ENCODE measurements at regions of chr15 and their contacts with region 1.

Region 1: DNA sequence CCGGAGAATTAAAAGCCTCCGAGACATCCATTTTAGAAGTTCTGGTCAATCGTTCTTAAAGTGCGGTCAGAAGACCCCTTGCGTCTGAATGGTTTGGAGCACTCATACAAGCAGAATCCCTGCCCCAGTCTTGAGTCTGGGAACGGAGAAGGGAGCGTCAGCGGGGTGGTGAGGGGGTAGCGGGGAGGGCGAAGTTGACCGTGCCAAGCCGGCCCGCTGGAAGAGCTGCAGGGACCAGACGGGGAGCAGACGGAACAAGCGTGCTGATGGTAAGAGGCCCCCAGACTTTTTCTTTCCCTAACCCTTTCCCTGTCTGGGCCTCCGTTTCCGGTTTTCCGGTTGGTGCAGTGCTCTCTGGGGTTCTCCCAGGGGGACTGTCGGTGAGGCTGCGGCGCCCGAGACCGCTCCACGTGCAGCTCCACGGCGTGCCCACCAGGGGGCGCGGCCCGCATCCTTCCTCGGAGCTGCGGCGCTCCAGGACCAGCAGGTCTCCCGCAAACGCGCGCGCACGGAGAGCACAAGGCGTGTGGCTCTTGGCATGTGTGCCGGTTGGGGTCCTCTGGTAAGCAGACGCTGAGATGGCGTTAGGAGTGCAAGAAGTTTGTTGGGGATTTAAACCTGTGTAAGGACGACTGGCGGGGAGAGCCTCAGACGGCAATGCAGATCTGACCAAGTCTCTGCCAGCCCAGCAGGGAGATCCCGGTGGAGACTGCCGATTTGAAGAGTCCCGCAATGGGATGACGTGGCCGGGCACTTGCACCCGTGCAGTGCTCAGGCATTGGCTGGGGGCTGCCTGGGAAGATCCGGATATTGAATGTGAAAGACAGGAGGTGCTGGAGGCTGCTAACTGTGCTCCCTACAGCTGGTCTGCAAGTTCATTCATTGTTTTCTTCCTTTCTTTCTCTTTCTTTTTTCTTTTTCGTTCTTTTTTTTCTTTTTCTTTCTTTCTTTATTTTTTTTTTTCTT is 19.2 kb upstream of the CORO2B start:
- DNase-seq: peak; percentile 89
- ATAC-seq: peak; percentile 85
- H3K4me3 Mint-ChIP-seq: peak overlapping the region; percentile 94
- H3K27ac Mint-ChIP-seq: peak overlapping the region; percentile 72
- H3K4me1 Mint-ChIP-seq: peaks cover 29% of the 10 kb centered on the region
- H3K27me3 Mint-ChIP-seq: peaks cover 20% of the 10 kb centered on the region
- CTCF ChIP-seq: peak; percentile 91

Region 2: DNA sequence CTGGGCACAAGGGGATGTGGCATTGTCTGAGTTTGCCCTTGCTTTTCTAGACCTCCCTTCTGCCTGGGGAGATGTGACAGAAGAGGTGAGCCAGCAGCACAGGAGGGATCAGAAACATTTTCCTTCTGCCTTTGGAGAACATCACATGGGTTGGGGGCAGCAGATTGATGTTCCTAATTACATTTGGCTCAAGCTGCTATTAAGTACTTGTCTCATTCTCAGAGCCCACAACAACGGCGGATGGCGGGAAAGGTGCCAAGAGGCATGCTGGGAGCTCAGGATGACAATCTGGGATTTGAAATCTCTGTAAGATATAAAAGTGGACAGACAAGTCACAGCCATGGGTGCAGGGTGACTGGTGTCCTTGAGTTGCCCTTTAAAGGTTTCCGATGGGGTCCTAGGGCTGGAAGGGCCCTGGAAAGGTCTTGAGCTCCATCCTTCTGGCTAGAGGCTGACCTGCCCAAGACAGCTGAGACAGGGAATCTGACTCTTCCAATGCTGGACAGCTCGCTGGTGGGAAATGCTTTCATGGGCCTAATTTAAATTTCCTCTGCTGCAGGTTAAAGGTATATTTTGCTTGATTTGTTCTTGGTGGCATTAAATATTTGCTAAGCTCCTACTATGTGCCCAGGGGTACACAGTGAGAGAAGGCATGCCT is 16.7 kb after region 1 on chr15:
- CTCF ChIA-PET with region 1: interaction called, 40 read pairs
- POLR2A ChIA-PET with region 1: interaction called, 3 read pairs
- DNase-seq: no peak
- ATAC-seq: no peak
- H3K4me3 Mint-ChIP-seq: no peak overlapping the region
- H3K27ac Mint-ChIP-seq: no peak overlapping the region
- H3K4me1 Mint-ChIP-seq: peaks cover 61% of the 10 kb centered on the region
- H3K27me3 Mint-ChIP-seq: peaks cover 51% of the 10 kb centered on the region
- CTCF ChIP-seq: no peak

Region 3: GRCh38 chr15:68631601-68632051 is 72.0 kb after region 1 on chr15:
- CTCF ChIA-PET with region 1: interaction called, 32 read pairs
- POLR2A ChIA-PET with region 1: no interaction called
- DNase-seq: peak; percentile 63
- ATAC-seq: peak; percentile 85
- H3K4me3 Mint-ChIP-seq: no peak overlapping the region
- H3K27ac Mint-ChIP-seq: no peak overlapping the region
- H3K4me1 Mint-ChIP-seq: peaks cover 24% of the 10 kb centered on the region
- H3K27me3 Mint-ChIP-seq: no peaks in the 10 kb centered on the region
- CTCF ChIP-seq: no peak

Region 4: GRCh38 chr15:68658151-68658550 is 98.5 kb after region 1 on chr15:
- CTCF ChIA-PET with region 1: interaction called, 48 read pairs
- POLR2A ChIA-PET with region 1: no interaction called
- DNase-seq: no peak
- ATAC-seq: no peak
- H3K4me3 Mint-ChIP-seq: no peak overlapping the region
- H3K27ac Mint-ChIP-seq: no peak overlapping the region
- H3K4me1 Mint-ChIP-seq: peaks cover 29% of the 10 kb centered on the region
- H3K27me3 Mint-ChIP-seq: no peaks in the 10 kb centered on the region
- CTCF ChIP-seq: no peak

Region 5: DNA sequence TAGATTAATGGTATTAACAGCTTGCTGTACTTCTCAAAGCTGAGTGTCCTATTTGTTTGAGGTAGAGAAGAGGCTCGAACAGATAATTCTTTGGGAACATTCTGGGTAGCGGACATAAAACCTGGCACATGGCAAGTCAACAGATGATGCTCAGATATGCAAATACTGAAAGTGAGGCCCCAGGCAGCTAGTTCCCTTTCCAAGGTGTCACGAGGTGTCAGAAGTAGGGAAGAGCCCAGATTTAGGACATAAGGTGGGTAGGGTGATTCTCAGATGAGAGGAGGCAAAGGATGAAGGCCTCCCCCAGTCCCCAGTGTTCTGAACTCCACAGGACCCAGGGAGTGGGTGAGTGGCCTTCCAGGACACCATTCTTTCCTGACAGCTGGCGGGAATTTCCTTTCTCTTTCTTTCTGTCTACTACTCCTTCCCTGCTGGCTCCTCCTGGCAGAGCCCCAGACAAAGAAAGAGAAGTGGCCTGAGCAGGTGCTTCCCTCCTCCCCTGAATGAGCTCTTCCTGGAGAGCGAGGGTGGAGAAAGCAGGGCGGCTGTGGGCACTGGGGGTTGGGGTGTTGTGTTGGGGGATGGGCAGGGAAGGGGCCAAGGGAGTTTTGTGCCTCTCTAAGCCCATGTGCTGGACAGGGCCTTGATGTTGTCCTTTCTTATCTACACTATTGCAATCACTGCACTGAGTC is 106.6 kb after region 1 on chr15:
- CTCF ChIA-PET with region 1: interaction called, 14 read pairs
- POLR2A ChIA-PET with region 1: no interaction called
- DNase-seq: peak; percentile 24
- ATAC-seq: peak; percentile 93
- H3K4me3 Mint-ChIP-seq: no peak overlapping the region
- H3K27ac Mint-ChIP-seq: no peak overlapping the region; the same call in none of the 2 replicates
- H3K4me1 Mint-ChIP-seq: peaks cover 18% of the 10 kb centered on the region
- H3K27me3 Mint-ChIP-seq: no peaks in the 10 kb centered on the region; the same call in 1 of the 2 replicates
- CTCF ChIP-seq: no peak

Region 6: DNA sequence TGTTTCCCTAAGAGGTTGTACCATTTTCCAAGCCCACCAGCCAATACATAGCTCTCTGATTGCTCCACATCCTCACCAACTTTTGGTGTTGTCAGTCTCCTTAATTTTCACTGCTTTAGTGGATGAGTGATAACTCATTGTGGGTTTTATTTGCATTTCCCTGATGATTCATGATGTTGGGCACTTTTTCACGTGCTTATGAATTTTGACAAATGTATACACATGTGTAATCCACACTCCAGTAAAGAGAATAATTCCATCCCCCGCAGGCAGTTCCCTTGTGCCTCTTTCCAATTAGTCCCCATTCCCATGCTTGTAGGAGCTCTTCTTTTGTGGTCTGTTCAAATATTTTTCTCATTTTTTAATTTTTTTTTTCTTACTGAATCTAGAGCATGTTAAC is 208.7 kb after region 1 on chr15:
- CTCF ChIA-PET with region 1: no interaction called
- POLR2A ChIA-PET with region 1: no interaction called
- DNase-seq: no peak
- ATAC-seq: no peak
- H3K4me3 Mint-ChIP-seq: no peak overlapping the region
- H3K27ac Mint-ChIP-seq: no peak overlapping the region
- H3K4me1 Mint-ChIP-seq: no peaks in the 10 kb centered on the region
- H3K27me3 Mint-ChIP-seq: peaks cover 8% of the 10 kb centered on the region; the same call in 1 of the 2 replicates
- CTCF ChIP-seq: no peak

Measured in WTC11 (cell line).